Activated CD4-positive, alpha-beta T cell treated with anti-CD3 and anti-CD28 coated beads, Interleukin-2, amount 10 ng/mL, durations not matched to agents 7 days and 5 days (primary cell): ENCODE measurements at regions of chr15 and their contacts with region 1.

Region 1: GRCh38 chr15:64888336-64888735 is 23.4 kb upstream of the ANKDD1A start:
- DNase-seq: no peak
- H3K4me3 Mint-ChIP-seq: no peak overlapping the region
- H3K27ac Mint-ChIP-seq: no peak overlapping the region
- H3K4me1 Mint-ChIP-seq: peaks cover 40% of the 10 kb centered on the region
- H3K27me3 Mint-ChIP-seq: no peaks in the 10 kb centered on the region

Region 2: DNA sequence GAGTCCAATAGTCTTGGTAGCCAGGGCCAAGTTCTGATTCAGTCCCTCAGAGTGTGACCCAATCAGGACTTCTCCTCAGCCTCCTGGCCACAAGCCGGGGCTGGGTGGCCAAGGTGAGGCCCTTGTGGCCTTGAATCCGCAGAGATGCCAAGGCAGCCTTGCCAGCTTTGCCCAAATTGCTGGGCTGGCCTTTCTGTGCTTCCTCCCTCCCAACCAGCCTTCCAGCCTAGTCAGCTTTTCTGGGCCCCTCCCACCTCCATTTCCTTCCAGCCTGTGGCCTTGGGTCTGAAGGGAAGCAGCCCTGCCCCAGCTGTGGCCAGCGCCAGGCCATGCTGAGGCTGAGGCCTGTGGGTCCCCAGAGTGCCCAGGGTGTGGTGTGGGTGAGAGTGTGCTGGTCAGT is 10.9 kb before region 1 on chr15:
- CTCF ChIA-PET with region 1: interaction called, 13 read pairs
- POLR2A ChIA-PET with region 1: interaction called, 6 read pairs
- DNase-seq: peak; percentile 17
- H3K4me3 Mint-ChIP-seq: no peak overlapping the region
- H3K27ac Mint-ChIP-seq: peak overlapping the region; percentile 66
- H3K4me1 Mint-ChIP-seq: peaks cover 37% of the 10 kb centered on the region
- H3K27me3 Mint-ChIP-seq: no peaks in the 10 kb centered on the region